Sigmoid colon (tissue), 7 donors: ENCODE measurements at regions of chr10 and their contacts with region 1.

Region 1: DNA sequence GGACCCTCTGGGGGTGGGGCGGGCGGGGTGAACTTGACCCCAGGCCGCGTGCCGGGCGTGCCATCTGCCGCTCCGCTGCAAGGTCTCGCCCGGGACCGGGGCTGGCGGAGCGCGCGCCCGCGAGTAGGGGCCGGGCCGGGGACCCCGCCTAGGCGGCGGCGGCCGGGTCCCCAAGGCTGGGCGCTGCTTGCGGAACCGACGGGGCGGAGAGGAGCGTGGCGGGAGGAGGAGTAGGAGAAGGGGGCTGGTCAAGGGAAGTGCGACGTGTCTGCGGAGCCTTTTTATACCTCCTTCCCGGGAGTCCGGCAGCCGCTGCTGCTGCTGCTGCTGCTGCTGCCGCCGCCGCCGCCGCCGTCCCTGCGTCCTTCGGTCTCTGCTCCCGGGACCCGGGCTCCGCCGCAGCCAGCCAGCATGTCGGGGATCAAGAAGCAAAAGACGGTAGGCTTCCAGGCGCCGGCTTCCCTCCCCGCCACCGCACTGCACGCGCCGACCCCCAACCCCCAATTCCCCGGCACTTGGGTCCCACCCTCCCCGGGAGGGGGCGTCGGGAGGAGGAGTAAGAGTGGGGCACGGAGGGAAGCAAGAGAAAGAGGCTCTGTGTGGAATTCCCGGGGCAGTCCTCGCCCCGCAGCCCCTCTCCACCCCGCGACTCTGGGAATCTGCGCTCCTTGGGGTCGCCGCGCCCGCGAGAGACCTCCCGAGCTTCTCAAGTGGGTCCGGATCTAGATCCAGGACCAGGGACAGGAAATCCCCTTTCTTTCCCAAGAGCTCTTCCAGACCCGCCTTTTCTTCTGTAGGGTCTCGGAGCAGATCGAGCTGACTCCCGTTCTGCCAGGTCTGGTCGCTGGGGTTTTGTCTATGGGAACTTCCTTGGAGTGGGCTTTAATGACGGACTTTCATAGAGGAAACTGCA is at the start of gene PAPSS2:
- DNase-seq: peak; percentile 87
- H3K4me3 ChIP-seq: peak within 1 kb of the TSS; percentile 54 to 67 (median 60)
- H3K27ac ChIP-seq: peak within 1 kb of the TSS; percentile 69 to 76 (median 73)
- H3K4me1 ChIP-seq: peaks cover 0 to 16% (median 11%) of the 10 kb centered on the region in 4 donors
- H3K27me3 ChIP-seq: peaks cover 0 to 17% (median 0%) of the 10 kb centered on the region in 3 donors
- CTCF ChIP-seq: no peak
- EP300 ChIP-seq: no peak
- POLR2A ChIP-seq: no peak
- total RNA-seq, gene PAPSS2: 7.1 to 8.6 (median 8.0) TPM

Region 2: DNA sequence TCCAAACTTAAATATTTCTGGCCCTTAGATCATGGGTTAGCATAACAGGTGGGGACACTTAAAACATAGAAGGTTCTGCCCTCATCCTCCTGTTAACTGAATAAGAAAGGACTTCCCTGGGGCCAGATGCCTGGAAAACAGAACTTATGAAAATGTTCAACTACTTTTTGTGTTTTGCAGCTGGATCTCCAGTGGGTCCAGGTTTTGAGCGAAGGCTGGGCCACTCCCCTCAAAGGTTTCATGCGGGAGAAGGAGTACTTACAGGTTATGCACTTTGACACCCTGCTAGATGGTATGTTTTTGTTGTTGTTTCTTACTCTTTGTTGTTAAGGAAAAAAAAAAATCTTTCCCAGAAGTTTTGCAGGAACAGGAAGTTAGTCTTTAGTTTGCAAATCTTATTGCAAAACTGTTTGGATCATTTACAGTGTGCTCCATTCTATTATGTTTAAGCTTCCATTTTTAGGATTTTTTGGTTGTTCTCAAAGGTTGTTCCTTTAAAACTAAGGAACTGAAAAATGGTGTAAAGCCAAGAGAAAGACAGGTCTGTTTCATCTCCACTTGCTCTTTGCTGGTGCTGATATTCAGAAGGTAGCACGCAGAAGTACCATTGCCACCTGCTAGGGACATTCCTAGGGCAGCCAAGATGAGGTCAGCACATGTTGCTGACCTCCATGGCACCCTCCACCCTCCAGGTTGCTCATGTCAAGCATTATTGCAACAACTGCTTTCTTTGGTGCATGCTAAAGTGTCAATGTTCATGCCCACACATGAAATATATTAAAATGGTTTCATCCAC is 55.9 kb after region 1 on chr10:
- intact Hi-C with region 1: no loop called
- DNase-seq: no peak
- H3K4me3 ChIP-seq: no peak overlapping the region
- H3K27ac ChIP-seq: peak overlapping the region in 3 of 4 donors; percentile 30 to 52 (median 45)
- H3K4me1 ChIP-seq: peaks cover 0 to 4% (median 0%) of the 10 kb centered on the region in 4 donors
- H3K27me3 ChIP-seq: no peaks in the 10 kb centered on the region
- CTCF ChIP-seq: no peak
- EP300 ChIP-seq: no peak
- POLR2A ChIP-seq: no peak

Region 3: GRCh38 chr10:87734987-87735827 is 75.4 kb after region 1 on chr10:
- intact Hi-C with region 1: loop called (anchors 5 kb)
- DNase-seq: no peak
- H3K4me3 ChIP-seq: no peak overlapping the region
- H3K27ac ChIP-seq: no peak overlapping the region
- H3K4me1 ChIP-seq: peaks cover 0 to 7% (median 6%) of the 10 kb centered on the region in 4 donors
- H3K27me3 ChIP-seq: no peaks in the 10 kb centered on the region
- CTCF ChIP-seq: peak; percentile 21 to 64 (median 58)
- EP300 ChIP-seq: no peak
- POLR2A ChIP-seq: no peak

Region 4: GRCh38 chr10:87771871-87772500 is 112.2 kb after region 1 on chr10:
- intact Hi-C with region 1: loop called (anchors 10 kb)
- DNase-seq: no peak
- H3K4me3 ChIP-seq: no peak overlapping the region
- H3K27ac ChIP-seq: no peak overlapping the region
- H3K4me1 ChIP-seq: no peaks in the 10 kb centered on the region
- H3K27me3 ChIP-seq: no peaks in the 10 kb centered on the region
- CTCF ChIP-seq: peak in 2 of 4 experiments; percentile 15 to 39
- EP300 ChIP-seq: no peak
- POLR2A ChIP-seq: no peak